ENCODE measurements at regions of chr6 and their contacts with region 1.

Region 1: GRCh38 chr6:1604158-1605030 is 5.3 kb upstream of the FOXC1 start:
- DNase-seq: peak; percentile 61 to 87
- H3K4me3 ChIP-seq: peak overlapping the region; percentile 46
- H3K4me3 Mint-ChIP-seq: peak overlapping the region; percentile 64
- H3K27ac Mint-ChIP-seq: no peak overlapping the region
- H3K4me1 ChIP-seq: no peaks in the 10 kb centered on the region
- H3K4me1 Mint-ChIP-seq: no peaks in the 10 kb centered on the region
- H3K27me3 ChIP-seq: no peaks in the 10 kb centered on the region
- H3K27me3 Mint-ChIP-seq: peaks cover 2% of the 10 kb centered on the region
- CTCF ChIP-seq: peak; percentile 78 to 96

Region 2: DNA sequence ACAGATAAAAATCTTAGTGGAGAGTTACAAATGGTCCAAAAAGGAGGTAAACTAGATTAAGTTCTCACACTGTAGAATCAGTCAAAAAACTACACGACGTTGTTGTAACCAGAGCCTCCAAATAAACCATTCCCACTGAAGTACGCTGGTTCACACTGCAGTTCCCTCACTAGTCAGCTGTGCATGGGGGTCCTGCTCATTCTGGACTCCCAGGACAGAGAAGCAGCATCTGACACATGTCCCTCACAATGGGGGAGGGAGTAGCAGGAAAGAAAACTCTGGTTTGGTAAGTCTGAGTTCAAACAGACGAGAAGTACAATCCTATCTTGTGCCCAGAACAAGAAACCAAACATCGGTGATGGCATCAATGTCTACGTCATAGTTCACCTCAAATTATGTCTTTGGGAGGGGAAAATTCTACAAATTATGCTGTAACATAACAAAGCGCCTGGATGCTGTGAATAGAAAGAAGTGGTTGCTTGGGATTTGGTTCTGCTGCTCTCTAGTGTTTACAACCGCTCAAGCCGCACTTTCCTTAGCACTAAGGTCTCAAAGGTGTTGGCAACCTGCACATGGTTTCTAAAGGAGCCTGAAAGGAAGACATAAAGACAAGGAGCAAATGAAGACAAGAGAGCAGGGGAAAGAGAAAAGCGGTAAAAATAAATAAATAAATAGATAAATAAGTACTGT is 433.0 kb after region 1 on chr6:
- CTCF ChIA-PET with region 1: no interaction called
- POLR2A ChIA-PET with region 1: no interaction called
- intact Hi-C with region 1: loop called (anchors 1 kb)
- DNase-seq: peak in 1 of 2 experiments; percentile 8
- H3K4me3 ChIP-seq: no peak overlapping the region
- H3K4me3 Mint-ChIP-seq: no peak overlapping the region
- H3K27ac Mint-ChIP-seq: no peak overlapping the region
- H3K4me1 ChIP-seq: no peaks in the 10 kb centered on the region
- H3K4me1 Mint-ChIP-seq: peaks cover 8% of the 10 kb centered on the region
- H3K27me3 ChIP-seq: no peaks in the 10 kb centered on the region
- H3K27me3 Mint-ChIP-seq: no peaks in the 10 kb centered on the region
- CTCF ChIP-seq: peak in 1 of 2 experiments; percentile 19

Region 3: GRCh38 chr6:2103644-2104523 is 499.5 kb after region 1 on chr6:
- CTCF ChIA-PET with region 1: interaction called, 3 read pairs
- POLR2A ChIA-PET with region 1: no interaction called
- intact Hi-C with region 1: loop called (anchors 2 kb)
- DNase-seq: peak in 1 of 2 experiments; percentile 34
- H3K4me3 ChIP-seq: no peak overlapping the region
- H3K4me3 Mint-ChIP-seq: no peak overlapping the region
- H3K27ac Mint-ChIP-seq: no peak overlapping the region
- H3K4me1 ChIP-seq: no peaks in the 10 kb centered on the region
- H3K4me1 Mint-ChIP-seq: peaks cover 7% of the 10 kb centered on the region
- H3K27me3 ChIP-seq: no peaks in the 10 kb centered on the region
- H3K27me3 Mint-ChIP-seq: no peaks in the 10 kb centered on the region
- CTCF ChIP-seq: peak in 1 of 2 experiments; percentile 58

Measured in Caco-2 (cell line).